Dendritic cell treated with granulocyte-macrophage colony-stimulating factor and Interleukin-4, amounts not matched to agents 40 ng/mL and 50 ng/mL, for 4 days (primary cell): ENCODE measurements at regions of chr19 and their contacts with region 1.

Region 1: GRCh38 chr19:8389891-8390616 is at the start of gene RAB11B:
- H3K4me3 Mint-ChIP-seq: peak within 1 kb of the TSS; percentile 90
- H3K27ac Mint-ChIP-seq: peak within 1 kb of the TSS; percentile 91
- H3K4me1 Mint-ChIP-seq: peaks cover 34% of the 10 kb centered on the region
- H3K27me3 Mint-ChIP-seq: no peaks in the 10 kb centered on the region

Region 2: GRCh38 chr19:8363803-8364771 is 26.0 kb before region 1 on chr19 and contains the start of gene ANGPTL4:
- intact Hi-C with region 1: loop called (anchors 1 kb)
- H3K4me3 Mint-ChIP-seq: peak within 1 kb of the TSS; percentile 76
- H3K27ac Mint-ChIP-seq: peak within 1 kb of the TSS; percentile 92
- H3K4me1 Mint-ChIP-seq: peaks cover 66% of the 10 kb centered on the region
- H3K27me3 Mint-ChIP-seq: peaks cover 66% of the 10 kb centered on the region

Region 3: GRCh38 chr19:8423817-8424223 is 33.8 kb after region 1 on chr19:
- intact Hi-C with region 1: no loop called
- H3K4me3 Mint-ChIP-seq: peak overlapping the region; percentile 66
- H3K27ac Mint-ChIP-seq: peak overlapping the region; percentile 97
- H3K4me1 Mint-ChIP-seq: peaks cover 31% of the 10 kb centered on the region
- H3K27me3 Mint-ChIP-seq: no peaks in the 10 kb centered on the region